Dorsolateral prefrontal cortex (tissue), 120 donors: ENCODE measurements at regions of chr17 and their contacts with region 1.

Region 1: DNA sequence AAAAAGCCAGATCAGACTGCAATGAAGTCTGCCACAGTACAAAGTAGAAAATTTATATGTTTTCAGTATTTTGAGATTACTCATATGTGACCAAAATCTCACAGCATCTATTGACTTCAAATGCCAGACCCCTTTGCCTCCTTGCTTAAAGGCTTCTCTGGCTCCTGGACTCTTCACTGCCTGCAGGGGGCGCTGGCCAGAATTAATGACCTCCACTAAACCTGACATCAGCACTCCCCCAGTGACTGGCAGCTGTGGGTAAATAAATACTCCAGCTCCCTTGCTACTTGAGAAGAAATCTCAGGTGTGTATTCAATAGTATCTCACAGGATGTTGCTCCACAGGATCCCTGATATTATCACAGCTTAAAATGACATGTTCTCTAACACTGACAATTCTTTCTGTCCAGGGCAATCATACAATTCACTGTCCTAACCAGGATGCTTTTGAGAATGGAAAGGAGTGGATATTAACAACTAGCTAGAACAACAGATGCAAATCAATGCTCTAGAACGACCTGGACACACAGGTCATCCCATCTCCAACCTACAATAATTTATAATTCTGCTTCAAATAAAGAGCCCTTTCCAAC is 4.0 kb downstream of the BECN1 start:
- DNase-seq: peak in 1 of 10 donors; percentile 36
- H3K4me3 ChIP-seq: no peak overlapping the region
- H3K27ac ChIP-seq: no peak overlapping the region
- H3K27me3 ChIP-seq: no peaks in the 10 kb centered on the region
- CTCF ChIP-seq: peak in 54 of 56 donors; percentile 16 to 72 (median 49)

Region 2: GRCh38 chr17:42720996-42721583 is 99.0 kb before region 1 on chr17:
- intact Hi-C with region 1: loop called in 1 of 2 experiments (anchors 5 kb)
- DNase-seq: peak in 2 of 10 donors; percentile 44 to 59
- H3K4me3 ChIP-seq: peak overlapping the region in 2 of 59 donors; percentile 9 to 13
- H3K27ac ChIP-seq: peak overlapping the region in 41 of 59 donors; percentile 4 to 83 (median 59)
- H3K27me3 ChIP-seq: no peaks in the 10 kb centered on the region
- CTCF ChIP-seq: peak; percentile 60 to 91 (median 78)

Region 3: DNA sequence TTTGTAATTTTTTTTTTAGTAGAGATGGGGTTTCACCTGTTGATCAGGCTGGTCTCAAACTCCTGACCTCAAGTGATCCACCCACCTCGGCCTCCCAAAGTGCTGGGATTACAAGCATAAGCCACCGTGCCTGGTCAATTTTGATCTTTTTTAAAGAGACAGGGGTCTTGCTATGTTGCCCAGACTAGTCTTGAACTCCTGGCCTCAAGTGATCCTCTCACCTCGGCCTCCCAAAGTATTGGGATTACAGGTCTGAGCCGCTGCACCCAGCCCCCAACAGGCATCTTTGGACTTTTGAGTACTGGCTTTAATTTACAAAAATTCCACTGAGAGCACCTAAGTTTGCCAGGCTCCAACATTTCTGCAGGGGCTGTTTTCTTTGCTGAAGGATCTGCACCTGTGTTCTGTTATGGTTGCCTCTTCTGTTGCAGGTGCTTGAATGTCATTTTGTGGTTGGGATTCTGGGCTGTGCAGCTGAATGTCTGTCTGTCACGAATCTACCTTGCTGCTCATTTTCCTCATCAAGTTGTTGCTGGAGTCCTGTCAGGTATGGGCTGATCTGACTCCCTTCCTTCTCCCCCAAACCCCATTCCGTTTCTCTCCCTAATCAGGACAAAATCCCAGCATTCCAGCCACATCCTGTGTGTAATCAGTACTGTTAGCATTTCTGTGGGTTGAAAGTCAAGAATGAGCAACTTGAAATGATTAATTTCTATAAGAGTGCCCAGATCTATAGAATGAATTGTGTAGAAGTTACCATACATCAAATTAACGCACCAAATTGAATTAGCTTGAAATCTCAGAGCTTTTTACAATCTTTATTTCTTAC is 89.0 kb after region 1 on chr17:
- intact Hi-C with region 1: no loop called
- DNase-seq: no peak
- H3K4me3 ChIP-seq: no peak overlapping the region
- H3K27ac ChIP-seq: no peak overlapping the region
- H3K27me3 ChIP-seq: no peaks in the 10 kb centered on the region
- CTCF ChIP-seq: no peak